Activated CD8-positive, alpha-beta memory T cell treated with anti-CD3 and anti-CD28 coated beads, Interleukin-2, amount 10 ng/mL, durations not matched to agents 7 days and 5 days (primary cell): ENCODE measurements at regions of chr19 and their contacts with region 1.

Region 1: GRCh38 chr19:18251587-18252369 is 22.5 kb downstream of the IQCN start:
- DNase-seq: peak; percentile 85
- ATAC-seq: peak; percentile 87
- H3K4me3 Mint-ChIP-seq: no peak overlapping the region
- H3K27ac Mint-ChIP-seq: no peak overlapping the region
- H3K4me1 Mint-ChIP-seq: peaks cover 3% of the 10 kb centered on the region
- H3K27me3 Mint-ChIP-seq: peaks cover 19% of the 10 kb centered on the region

Region 2: GRCh38 chr19:18203863-18204393 is 47.9 kb before region 1 on chr19 and contains the start of gene RAB3A:
- CTCF ChIA-PET with region 1: interaction called, 166 read pairs
- DNase-seq: peak; percentile 100
- ATAC-seq: peak; percentile 93
- H3K4me3 Mint-ChIP-seq: peak within 1 kb of the TSS; percentile 83
- H3K27ac Mint-ChIP-seq: peak within 1 kb of the TSS; percentile 91
- H3K4me1 Mint-ChIP-seq: peaks cover 17% of the 10 kb centered on the region
- H3K27me3 Mint-ChIP-seq: peaks cover 5% of the 10 kb centered on the region
- total RNA-seq, gene RAB3A: 3.5 to 3.7 TPM

Region 3: GRCh38 chr19:18233224-18233825 is 18.5 kb before region 1 on chr19:
- CTCF ChIA-PET with region 1: interaction called, 11 read pairs
- DNase-seq: peak; percentile 72
- ATAC-seq: peak; percentile 85
- H3K4me3 Mint-ChIP-seq: no peak overlapping the region
- H3K27ac Mint-ChIP-seq: no peak overlapping the region
- H3K4me1 Mint-ChIP-seq: peaks cover 4% of the 10 kb centered on the region
- H3K27me3 Mint-ChIP-seq: peaks cover 54% of the 10 kb centered on the region

Region 4: GRCh38 chr19:18262917-18263316 is 11.1 kb after region 1 on chr19:
- CTCF ChIA-PET with region 1: interaction called, 10 read pairs
- DNase-seq: no peak
- ATAC-seq: no peak
- H3K4me3 Mint-ChIP-seq: no peak overlapping the region
- H3K27ac Mint-ChIP-seq: no peak overlapping the region
- H3K4me1 Mint-ChIP-seq: peaks cover 9% of the 10 kb centered on the region
- H3K27me3 Mint-ChIP-seq: no peaks in the 10 kb centered on the region

Region 5: DNA sequence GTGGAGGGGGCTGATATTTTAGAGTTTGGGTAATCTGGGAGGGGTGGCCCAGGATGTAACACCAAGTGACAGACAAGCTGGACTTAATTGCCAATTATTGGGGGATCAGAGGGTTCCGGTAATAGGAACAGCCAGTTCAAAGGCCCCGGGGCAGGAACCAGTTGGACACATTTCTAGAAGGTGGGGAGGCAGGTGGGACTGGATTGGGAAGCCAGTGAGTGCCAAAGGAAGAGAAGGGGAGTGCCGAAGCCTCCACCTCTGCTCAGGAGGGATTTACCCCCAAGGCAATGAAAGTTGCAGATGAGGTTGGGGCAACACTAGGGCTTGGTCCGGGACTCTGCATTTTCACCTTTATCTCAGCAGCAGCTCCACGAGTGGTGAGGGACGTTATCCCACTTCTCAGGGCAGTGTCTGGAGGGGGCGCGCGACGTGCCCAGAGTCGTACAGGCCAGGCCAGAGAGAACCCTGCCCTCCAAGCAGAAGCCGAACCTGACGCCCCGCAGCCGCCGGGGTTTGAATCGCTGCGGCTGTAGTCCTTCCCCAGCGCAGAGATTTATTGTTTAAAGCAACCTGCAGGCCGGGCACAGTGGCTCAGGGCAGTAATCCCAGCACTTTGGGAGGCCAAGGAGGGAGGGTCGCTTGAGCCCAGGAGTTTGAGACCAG is 35.3 kb after region 1 on chr19:
- CTCF ChIA-PET with region 1: no interaction called
- DNase-seq: no peak
- ATAC-seq: no peak
- H3K4me3 Mint-ChIP-seq: no peak overlapping the region
- H3K27ac Mint-ChIP-seq: peak overlapping the region; percentile 69
- H3K4me1 Mint-ChIP-seq: peaks cover 69% of the 10 kb centered on the region
- H3K27me3 Mint-ChIP-seq: no peaks in the 10 kb centered on the region